Heart right ventricle (tissue), 16 donors: ENCODE measurements at regions of chr9 and their contacts with region 1.

Region 1: GRCh38 chr9:123749580-123750202 is 180.2 kb downstream of the DENND1A start:
- DNase-seq: no peak
- ATAC-seq: peak in 1 of 8 donors; percentile 47
- H3K4me3 ChIP-seq: no peak overlapping the region
- H3K27ac ChIP-seq: no peak overlapping the region
- H3K4me1 ChIP-seq: peaks cover 0 to 17% (median 0%) of the 10 kb centered on the region in 9 donors
- H3K27me3 ChIP-seq: no peaks in the 10 kb centered on the region
- CTCF ChIP-seq: no peak

Region 2: GRCh38 chr9:123562844-123563346 is 186.8 kb before region 1 on chr9:
- intact Hi-C with region 1: no loop called
- DNase-seq: no peak
- ATAC-seq: peak in 1 of 8 donors; percentile 41
- H3K4me3 ChIP-seq: no peak overlapping the region
- H3K27ac ChIP-seq: peak overlapping the region in 1 of 10 donors; percentile 22
- H3K4me1 ChIP-seq: peaks cover 0 to 14% (median 0%) of the 10 kb centered on the region in 9 donors
- H3K27me3 ChIP-seq: no peaks in the 10 kb centered on the region
- CTCF ChIP-seq: no peak

Region 3: DNA sequence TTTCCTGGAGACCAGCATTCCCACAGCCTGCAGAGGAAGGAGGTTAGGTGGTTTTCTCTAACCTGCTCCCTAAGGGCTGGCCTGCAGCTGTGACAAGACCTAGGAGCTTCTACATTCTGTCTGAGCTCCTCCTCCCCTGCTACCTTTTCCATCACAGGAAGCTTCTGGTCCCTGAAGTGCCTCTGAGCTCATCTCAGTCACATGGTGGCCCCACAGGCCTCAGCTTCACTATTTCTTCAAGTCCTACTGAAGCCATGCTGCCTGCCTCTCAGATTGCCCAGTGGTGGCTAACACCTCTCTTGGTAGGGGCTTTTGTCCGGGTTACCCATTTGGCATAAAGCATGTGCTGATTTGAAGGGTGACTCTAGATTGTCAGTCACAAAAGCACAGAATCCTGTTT is 134.3 kb before region 1 on chr9:
- intact Hi-C with region 1: no loop called
- DNase-seq: no peak
- ATAC-seq: no peak
- H3K4me3 ChIP-seq: no peak overlapping the region
- H3K27ac ChIP-seq: no peak overlapping the region
- H3K4me1 ChIP-seq: peaks cover 0 to 21% (median 0%) of the 10 kb centered on the region in 9 donors
- H3K27me3 ChIP-seq: no peaks in the 10 kb centered on the region
- CTCF ChIP-seq: no peak

Region 4: GRCh38 chr9:123678038-123678877 is 71.4 kb before region 1 on chr9:
- intact Hi-C with region 1: no loop called
- DNase-seq: no peak
- ATAC-seq: peak in 3 of 8 donors; percentile 36 to 60 (median 37)
- H3K4me3 ChIP-seq: no peak overlapping the region
- H3K27ac ChIP-seq: no peak overlapping the region
- H3K4me1 ChIP-seq: peaks cover 0 to 22% (median 11%) of the 10 kb centered on the region in 9 donors
- H3K27me3 ChIP-seq: no peaks in the 10 kb centered on the region
- CTCF ChIP-seq: no peak

Region 5: DNA sequence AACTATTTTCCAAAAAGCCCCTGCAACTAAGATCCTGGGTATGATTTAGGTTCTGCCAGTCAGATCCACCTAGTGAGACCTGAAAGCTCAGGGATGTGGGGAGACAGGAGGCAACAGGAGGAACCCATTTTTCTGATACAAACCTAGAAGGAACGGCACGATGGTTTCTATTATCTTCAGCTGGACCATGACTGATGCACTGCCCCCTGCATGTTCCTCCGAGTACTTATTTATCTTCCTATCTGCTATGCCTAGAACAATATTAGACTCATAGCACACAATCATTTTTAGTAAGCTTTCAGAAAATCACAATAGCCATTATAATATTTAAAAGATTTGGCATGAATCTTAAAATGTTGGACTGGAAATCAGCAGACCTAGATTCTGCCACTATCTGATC is 59.3 kb after region 1 on chr9:
- intact Hi-C with region 1: loop called in 1 of 10 experiments (anchors 10 kb)
- DNase-seq: no peak
- ATAC-seq: no peak
- H3K4me3 ChIP-seq: no peak overlapping the region
- H3K27ac ChIP-seq: no peak overlapping the region
- H3K4me1 ChIP-seq: peaks cover 0 to 3% (median 0%) of the 10 kb centered on the region in 9 donors
- H3K27me3 ChIP-seq: no peaks in the 10 kb centered on the region
- CTCF ChIP-seq: no peak